Activated CD4-positive, alpha-beta memory T cell treated with anti-CD3 and anti-CD28 coated beads for 36 hours (primary cell): ENCODE measurements at regions of chr11 and their contacts with region 1.

Region 1: GRCh38 chr11:20158597-20159257 is 1.5 kb downstream of the DBX1 start:
- DNase-seq: peak; percentile 42
- H3K4me3 Mint-ChIP-seq: peak overlapping the region; percentile 21
- H3K27ac Mint-ChIP-seq: no peak overlapping the region
- H3K4me1 Mint-ChIP-seq: peaks cover 32% of the 10 kb centered on the region
- H3K27me3 Mint-ChIP-seq: peaks cover 70% of the 10 kb centered on the region

Region 2: GRCh38 chr11:19988598-19988997 is 170.1 kb before region 1 on chr11:
- CTCF ChIA-PET with region 1: no interaction called
- POLR2A ChIA-PET with region 1: no interaction called
- intact Hi-C with region 1: no loop called
- DNase-seq: no peak
- H3K4me3 Mint-ChIP-seq: no peak overlapping the region
- H3K27ac Mint-ChIP-seq: no peak overlapping the region
- H3K4me1 Mint-ChIP-seq: no peaks in the 10 kb centered on the region
- H3K27me3 Mint-ChIP-seq: no peaks in the 10 kb centered on the region

Region 3: DNA sequence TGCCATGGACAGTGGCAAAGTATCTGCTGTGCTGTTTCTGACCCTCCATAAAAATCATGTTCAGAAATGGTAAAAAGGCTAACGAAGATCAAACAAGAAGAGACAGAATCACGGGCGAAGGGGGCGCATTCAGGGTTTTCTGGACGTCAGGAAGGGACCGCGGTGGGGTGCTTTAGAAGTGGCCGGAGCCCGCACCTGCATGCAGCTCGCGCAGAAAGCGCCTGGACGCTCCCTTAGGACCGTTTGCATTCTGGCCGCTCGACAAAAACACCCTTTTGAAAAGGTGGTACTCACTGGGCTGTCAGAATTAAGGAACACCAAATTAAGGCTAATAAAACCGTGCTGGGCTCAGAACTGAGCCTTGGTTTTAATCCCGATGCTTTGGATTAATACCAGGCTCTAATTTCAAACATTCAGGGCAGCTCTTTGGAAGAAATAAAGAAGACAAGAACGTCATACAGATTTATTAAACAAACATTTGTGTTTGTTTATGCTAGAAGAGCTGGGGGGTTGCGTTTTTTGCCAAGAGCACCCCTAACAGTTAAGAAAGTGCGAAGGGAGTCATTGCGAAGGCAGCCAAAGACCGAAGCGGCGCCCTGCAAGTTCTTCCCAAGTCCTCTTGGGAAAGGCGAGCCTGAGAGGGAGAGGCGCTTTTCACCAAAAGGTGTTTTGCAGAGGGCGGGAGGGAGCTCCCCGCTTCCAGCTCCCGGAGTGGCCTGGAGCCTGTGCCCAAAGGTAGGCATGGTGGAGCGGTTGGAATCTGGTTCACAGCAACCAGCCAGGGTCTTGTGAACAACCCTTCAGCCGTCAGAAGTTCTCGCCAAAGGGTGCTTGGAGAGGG is 49.3 kb after region 1 on chr11:
- CTCF ChIA-PET with region 1: no interaction called
- POLR2A ChIA-PET with region 1: no interaction called
- intact Hi-C with region 1: loop called (anchors 5 kb)
- DNase-seq: no peak
- H3K4me3 Mint-ChIP-seq: no peak overlapping the region
- H3K27ac Mint-ChIP-seq: no peak overlapping the region
- H3K4me1 Mint-ChIP-seq: peaks cover 2% of the 10 kb centered on the region
- H3K27me3 Mint-ChIP-seq: peaks cover 45% of the 10 kb centered on the region

Region 4: DNA sequence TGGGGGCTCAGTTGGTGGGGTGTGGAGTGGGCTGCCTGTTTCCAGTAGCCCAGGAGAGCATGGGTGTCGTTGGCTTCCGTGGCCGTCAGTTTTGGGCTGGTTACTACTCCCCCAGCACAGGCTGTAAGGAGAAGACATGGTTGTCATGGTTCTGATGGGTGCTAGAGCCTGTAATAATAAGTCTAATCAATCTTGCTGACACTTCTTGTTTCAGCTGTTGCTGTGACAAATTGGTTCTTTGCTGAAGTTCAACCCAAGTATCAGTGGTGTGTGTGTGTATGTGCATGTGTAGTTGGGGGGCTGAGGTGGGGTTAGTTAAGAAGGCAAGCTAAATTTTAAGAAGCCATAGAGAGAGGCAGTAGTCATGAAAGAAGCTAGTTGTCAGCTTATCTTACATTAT is 62.8 kb after region 1 on chr11:
- CTCF ChIA-PET with region 1: no interaction called
- POLR2A ChIA-PET with region 1: no interaction called
- intact Hi-C with region 1: no loop called
- DNase-seq: no peak
- H3K4me3 Mint-ChIP-seq: no peak overlapping the region
- H3K27ac Mint-ChIP-seq: no peak overlapping the region
- H3K4me1 Mint-ChIP-seq: no peaks in the 10 kb centered on the region
- H3K27me3 Mint-ChIP-seq: peaks cover 11% of the 10 kb centered on the region

Region 5: DNA sequence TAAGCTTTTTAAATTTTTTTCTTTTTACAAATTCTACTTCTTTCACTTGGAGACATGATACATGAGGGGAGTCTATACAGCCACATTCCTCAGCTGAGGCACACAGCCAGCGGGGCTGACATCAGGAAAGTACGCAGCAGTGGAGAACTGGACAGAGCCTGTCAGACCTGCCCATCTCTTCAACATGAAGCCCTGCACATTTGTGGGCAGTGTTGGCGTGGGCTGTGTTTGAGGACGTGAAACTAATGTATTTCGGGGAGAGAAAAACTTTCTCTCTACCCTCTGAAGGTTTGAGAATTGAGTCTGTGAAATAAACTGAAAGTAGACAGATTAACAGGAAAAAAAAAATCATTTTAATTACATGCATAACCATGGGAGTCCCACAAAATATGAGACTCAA is 120.0 kb after region 1 on chr11:
- CTCF ChIA-PET with region 1: no interaction called
- POLR2A ChIA-PET with region 1: no interaction called
- intact Hi-C with region 1: no loop called
- DNase-seq: no peak
- H3K4me3 Mint-ChIP-seq: no peak overlapping the region
- H3K27ac Mint-ChIP-seq: no peak overlapping the region
- H3K4me1 Mint-ChIP-seq: no peaks in the 10 kb centered on the region
- H3K27me3 Mint-ChIP-seq: peaks cover 22% of the 10 kb centered on the region

Region 6: DNA sequence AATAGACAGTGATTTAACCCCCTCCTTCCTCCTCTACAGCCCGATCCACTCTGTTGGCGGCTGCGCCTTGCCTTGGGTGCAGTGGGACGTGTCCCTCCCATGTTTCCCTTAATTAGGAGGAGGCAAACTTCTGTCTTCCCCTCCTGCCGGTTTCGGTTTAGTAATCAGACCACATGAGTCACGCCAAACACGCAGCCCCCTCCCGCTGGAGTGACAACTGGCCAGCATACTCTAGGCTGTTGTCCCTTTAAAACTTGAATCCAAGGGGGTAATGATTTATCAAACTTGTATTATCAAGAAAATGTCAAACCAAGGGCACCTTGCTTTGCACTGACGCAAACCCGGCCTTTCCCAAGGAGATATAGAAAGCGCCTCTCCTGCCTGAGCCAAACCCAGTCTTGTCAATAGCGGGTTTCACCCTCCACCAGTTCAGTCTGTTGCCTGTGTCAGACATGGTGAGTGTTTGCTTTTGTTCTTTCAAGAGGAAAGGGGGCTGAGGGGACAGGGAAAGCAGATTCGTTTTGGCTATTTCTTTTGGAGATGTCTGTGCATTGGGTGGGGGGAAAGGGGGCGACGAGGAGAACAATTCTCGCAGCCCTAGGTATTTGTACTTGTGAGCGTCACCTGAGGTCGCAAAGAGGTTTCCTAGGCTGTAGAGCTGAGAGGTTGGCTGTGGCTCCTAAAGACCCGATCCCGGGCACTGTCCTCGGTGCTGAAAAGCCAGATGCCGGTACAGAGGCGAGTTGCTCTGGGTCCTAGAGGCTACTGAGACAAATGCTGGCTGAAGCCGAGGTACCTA is 440.7 kb after region 1 on chr11 and contains the start of gene SLC6A5:
- CTCF ChIA-PET with region 1: no interaction called
- POLR2A ChIA-PET with region 1: no interaction called
- intact Hi-C with region 1: loop called (anchors 2 kb)
- DNase-seq: peak; percentile 49
- H3K4me3 Mint-ChIP-seq: no peak within 1 kb of the TSS
- H3K27ac Mint-ChIP-seq: no peak within 1 kb of the TSS
- H3K4me1 Mint-ChIP-seq: peaks cover 8% of the 10 kb centered on the region
- H3K27me3 Mint-ChIP-seq: peaks cover 85% of the 10 kb centered on the region
- total RNA-seq, gene SLC6A5: not detected

Region 7: GRCh38 chr11:20688761-20689160 is 530.0 kb after region 1 on chr11:
- CTCF ChIA-PET with region 1: no interaction called
- POLR2A ChIA-PET with region 1: no interaction called
- intact Hi-C with region 1: no loop called
- DNase-seq: no peak
- H3K4me3 Mint-ChIP-seq: no peak overlapping the region
- H3K27ac Mint-ChIP-seq: no peak overlapping the region
- H3K4me1 Mint-ChIP-seq: no peaks in the 10 kb centered on the region
- H3K27me3 Mint-ChIP-seq: no peaks in the 10 kb centered on the region